Common myeloid progenitor, CD34-positive (primary cell): ENCODE measurements at regions of chr17 and their contacts with region 1.

Region 1: DNA sequence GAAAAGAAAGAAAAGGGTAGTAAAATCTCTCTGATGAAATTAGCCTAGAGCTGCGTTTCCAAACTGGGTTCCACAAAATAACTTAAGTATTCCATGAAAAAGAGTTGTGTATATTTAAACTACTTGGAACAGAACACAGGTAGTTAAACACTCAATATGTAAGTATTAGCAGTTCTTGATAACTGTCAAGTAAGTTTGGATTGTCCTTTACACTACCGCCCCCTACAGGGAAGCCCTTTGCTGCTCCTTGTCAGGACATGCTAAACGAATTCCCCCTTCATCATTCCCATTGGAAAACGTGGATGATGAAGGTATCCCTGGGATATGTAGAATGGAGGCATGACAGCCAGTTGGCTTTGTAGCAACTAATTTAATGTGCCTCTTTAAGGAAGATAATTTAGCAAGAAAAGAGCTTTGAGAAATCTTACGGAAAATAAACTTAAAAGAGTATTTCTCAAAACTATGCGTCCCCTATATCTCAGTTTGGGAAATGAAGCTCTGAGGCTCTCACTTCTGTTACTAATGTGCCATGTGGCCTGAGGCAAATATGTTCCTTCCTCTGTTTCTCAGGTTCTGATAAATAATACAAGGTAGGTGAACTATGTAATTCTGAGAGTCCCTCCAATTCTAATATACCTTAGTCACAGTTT is 18.8 kb downstream of the NCBP3 start:
- DNase-seq: peak; percentile 78 to 89 (median 85)
- H3K4me3 ChIP-seq: no peak overlapping the region
- H3K27ac ChIP-seq: no peak overlapping the region
- H3K4me1 ChIP-seq: peaks cover 0 to 5% (median 0%) of the 10 kb centered on the region in 4 experiments
- H3K27me3 ChIP-seq: no peaks in the 10 kb centered on the region

Region 2: DNA sequence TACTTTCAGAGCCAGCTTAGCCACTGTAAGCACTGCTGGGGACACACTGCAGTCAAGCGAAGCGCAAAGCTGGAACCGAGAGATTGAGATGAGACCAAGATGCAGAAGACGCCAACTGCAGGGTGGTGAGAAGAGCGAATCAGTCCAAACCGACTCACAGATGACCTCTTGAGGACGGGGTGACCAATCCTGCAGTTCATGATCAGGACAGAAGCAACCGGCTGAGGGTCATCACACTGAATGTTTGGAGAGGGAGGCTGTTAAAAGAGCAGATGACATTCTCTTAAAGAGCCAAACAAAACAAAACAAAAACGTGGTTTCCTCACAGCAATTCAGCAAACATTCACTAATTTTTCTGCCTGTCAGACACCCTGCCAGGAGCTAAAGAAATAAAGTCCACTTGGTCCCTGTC is 95.0 kb before region 1 on chr17:
- CTCF ChIA-PET with region 1: interaction called, 267 read pairs
- POLR2A ChIA-PET with region 1: no interaction called
- DNase-seq: no peak
- H3K4me3 ChIP-seq: no peak overlapping the region
- H3K27ac ChIP-seq: no peak overlapping the region
- H3K4me1 ChIP-seq: no peaks in the 10 kb centered on the region
- H3K27me3 ChIP-seq: no peaks in the 10 kb centered on the region

Region 3: GRCh38 chr17:3762922-3763776 is 64.1 kb before region 1 on chr17:
- CTCF ChIA-PET with region 1: interaction called, 15 read pairs
- POLR2A ChIA-PET with region 1: no interaction called
- DNase-seq: peak in 2 of 3 donors; percentile 35 to 49
- H3K4me3 ChIP-seq: no peak overlapping the region
- H3K27ac ChIP-seq: no peak overlapping the region
- H3K4me1 ChIP-seq: peaks cover 0 to 41% (median 26%) of the 10 kb centered on the region in 4 experiments
- H3K27me3 ChIP-seq: no peaks in the 10 kb centered on the region

Region 4: GRCh38 chr17:3802461-3803307 is 24.6 kb before region 1 on chr17:
- CTCF ChIA-PET with region 1: interaction called, 14 read pairs
- POLR2A ChIA-PET with region 1: no interaction called
- DNase-seq: no peak
- H3K4me3 ChIP-seq: no peak overlapping the region
- H3K27ac ChIP-seq: no peak overlapping the region
- H3K4me1 ChIP-seq: peaks cover 2 to 31% (median 15%) of the 10 kb centered on the region in 4 experiments
- H3K27me3 ChIP-seq: no peaks in the 10 kb centered on the region

Region 5: DNA sequence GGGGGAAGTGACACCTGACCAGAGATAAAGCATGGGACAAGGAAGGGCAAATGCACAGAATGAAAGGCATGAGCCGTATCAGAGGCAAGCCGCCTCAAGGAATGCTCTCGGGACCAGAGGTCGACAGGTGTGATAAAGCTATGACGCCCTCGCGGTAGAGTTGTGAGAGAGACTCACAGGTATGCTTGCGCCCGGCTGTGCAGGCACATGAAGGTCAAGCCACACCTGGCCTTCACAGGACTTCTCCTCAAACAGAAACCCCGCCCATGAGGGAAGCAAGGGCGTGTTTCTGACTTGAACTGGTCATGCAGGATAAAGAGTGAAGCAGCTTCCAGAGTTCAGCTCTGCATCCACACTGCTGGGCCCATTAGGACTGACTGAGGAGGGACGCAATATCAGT is 11.0 kb after region 1 on chr17:
- CTCF ChIA-PET with region 1: interaction called, 34 read pairs
- POLR2A ChIA-PET with region 1: no interaction called
- DNase-seq: no peak
- H3K4me3 ChIP-seq: no peak overlapping the region
- H3K27ac ChIP-seq: peak overlapping the region in 1 of 2 experiments; percentile 11
- H3K4me1 ChIP-seq: no peaks in the 10 kb centered on the region
- H3K27me3 ChIP-seq: no peaks in the 10 kb centered on the region

Region 6: GRCh38 chr17:3845621-3846441 is 18.6 kb after region 1 on chr17 and contains the start of gene NCBP3:
- CTCF ChIA-PET with region 1: interaction called, 34 read pairs
- POLR2A ChIA-PET with region 1: no interaction called
- DNase-seq: peak; percentile 94 to 97 (median 97)
- H3K4me3 ChIP-seq: peak within 1 kb of the TSS; percentile 79 to 92 (median 88)
- H3K27ac ChIP-seq: peak within 1 kb of the TSS; percentile 82 to 91
- H3K4me1 ChIP-seq: peaks cover 3 to 22% (median 19%) of the 10 kb centered on the region in 4 experiments
- H3K27me3 ChIP-seq: no peaks in the 10 kb centered on the region

Region 7: GRCh38 chr17:3893003-3893719 is 65.9 kb after region 1 on chr17 and contains the start of gene CAMKK1:
- CTCF ChIA-PET with region 1: no interaction called
- POLR2A ChIA-PET with region 1: no interaction called
- DNase-seq: peak; percentile 80 to 91 (median 89)
- H3K4me3 ChIP-seq: peak within 1 kb of the TSS; percentile 38 to 78 (median 66)
- H3K27ac ChIP-seq: no peak within 1 kb of the TSS
- H3K4me1 ChIP-seq: peaks cover 2 to 38% (median 32%) of the 10 kb centered on the region in 4 experiments
- H3K27me3 ChIP-seq: no peaks in the 10 kb centered on the region

Region 8: DNA sequence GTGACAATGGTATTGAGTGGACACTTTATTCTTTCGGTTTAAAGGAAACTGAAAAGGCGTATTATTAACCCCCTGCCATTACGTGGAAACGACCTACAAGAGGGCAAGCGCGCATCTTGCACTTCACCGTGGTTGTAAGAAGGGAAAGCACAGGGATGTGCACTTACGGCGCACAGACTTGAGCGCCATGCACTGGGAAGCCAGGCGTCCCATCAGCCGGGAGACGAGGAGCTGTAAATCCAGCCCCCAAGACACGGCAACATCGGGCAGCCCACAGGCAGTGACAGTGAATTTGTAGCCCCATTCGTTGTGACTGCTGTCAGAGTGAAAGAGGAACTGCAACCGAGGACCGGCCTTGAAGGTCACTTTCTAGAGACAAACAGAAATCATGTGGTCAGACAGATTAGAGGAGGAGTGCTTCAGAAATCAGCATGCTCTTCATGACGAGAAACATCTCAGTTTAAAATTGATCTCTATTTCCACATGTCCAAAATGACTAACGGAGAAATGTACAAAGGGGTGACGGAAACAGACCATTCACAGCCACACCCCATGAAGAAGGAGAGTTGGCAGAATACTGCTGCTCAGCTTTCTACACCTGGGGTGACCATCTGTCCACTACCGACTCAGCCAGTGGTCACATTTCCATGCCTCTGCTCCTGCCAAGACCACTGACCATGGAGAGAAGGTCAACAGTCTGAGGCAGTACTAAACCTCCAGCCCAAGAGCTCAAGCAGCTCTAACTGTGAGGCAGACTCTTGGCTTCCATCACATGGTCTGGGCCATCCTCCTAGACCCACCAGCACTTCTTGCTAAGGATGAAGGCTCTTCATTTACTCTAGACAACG is 247.0 kb after region 1 on chr17:
- CTCF ChIA-PET with region 1: no interaction called
- POLR2A ChIA-PET with region 1: no interaction called
- DNase-seq: no peak
- H3K4me3 ChIP-seq: no peak overlapping the region
- H3K27ac ChIP-seq: no peak overlapping the region
- H3K4me1 ChIP-seq: no peaks in the 10 kb centered on the region
- H3K27me3 ChIP-seq: no peaks in the 10 kb centered on the region